ENCODE measurements at regions of chr11 and their contacts with region 1.

Region 1: DNA sequence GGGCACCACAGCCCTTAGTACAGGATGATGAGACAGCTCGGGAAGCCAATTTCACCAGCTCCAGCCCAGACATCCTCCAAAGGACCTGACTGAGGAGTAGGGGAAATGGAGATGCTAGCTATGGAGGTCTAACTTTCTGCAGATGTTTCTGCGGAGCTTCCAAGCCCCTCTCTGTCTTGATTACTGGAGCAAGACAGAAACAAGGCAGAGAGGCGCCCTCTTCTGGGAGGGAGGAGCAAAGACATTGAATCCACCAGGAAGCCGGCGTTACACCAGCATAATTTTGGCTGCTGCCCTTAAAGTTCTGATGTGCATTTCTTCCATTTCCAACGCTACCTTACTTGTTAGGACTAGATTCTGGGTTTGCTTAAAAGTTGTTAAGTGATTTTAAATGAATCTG is 107.3 kb upstream of the HSD17B12 start:
- DNase-seq: no peak
- H3K4me3 Mint-ChIP-seq: no peak overlapping the region
- H3K27ac Mint-ChIP-seq: no peak overlapping the region
- H3K4me1 Mint-ChIP-seq: peaks cover 25% of the 10 kb centered on the region
- H3K27me3 Mint-ChIP-seq: peaks cover 83% of the 10 kb centered on the region

Region 2: GRCh38 chr11:43557553-43558110 is 15.6 kb before region 1 on chr11:
- intact Hi-C with region 1: loop called (anchors 2 kb)
- DNase-seq: no peak
- H3K4me3 Mint-ChIP-seq: no peak overlapping the region
- H3K27ac Mint-ChIP-seq: no peak overlapping the region
- H3K4me1 Mint-ChIP-seq: peaks cover 10% of the 10 kb centered on the region
- H3K27me3 Mint-ChIP-seq: peaks cover 72% of the 10 kb centered on the region